ENCODE measurements at regions of chr1 and their contacts with region 1.

Region 1: DNA sequence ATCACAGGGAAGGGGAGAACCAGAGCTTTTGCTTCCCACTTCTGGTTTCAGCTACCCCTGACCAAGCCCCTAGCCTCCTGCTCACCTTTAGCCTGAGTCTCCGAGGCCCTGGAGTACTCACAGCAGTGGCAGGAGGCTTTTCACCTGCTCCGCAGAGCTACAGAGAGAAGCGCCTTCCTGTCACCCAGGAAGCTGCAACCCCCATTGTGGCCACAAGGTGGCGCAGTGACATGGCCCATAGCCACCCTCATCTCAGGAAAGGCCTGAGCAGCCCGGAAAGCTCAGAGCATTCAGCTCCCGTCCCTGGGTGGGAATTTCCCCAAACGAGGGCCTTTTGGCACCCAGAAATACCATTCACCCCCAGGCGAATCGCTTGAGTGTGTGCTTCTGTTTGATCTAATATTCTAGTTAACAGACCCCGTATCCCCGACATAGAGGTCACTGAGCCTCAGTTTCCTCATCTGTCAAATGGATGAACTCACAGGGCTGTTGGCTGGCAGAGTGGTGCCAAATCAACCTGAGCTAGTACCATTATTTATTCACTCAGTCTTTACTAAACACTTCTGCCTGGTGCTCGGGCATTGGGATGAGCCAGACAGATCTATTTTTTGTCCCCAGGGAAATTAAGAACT is 25.3 kb downstream of the A3GALT2 start:
- DNase-seq: peak; percentile 91
- H3K4me3 ChIP-seq: no peak overlapping the region
- H3K27ac ChIP-seq: no peak overlapping the region
- H3K4me1 ChIP-seq: peaks cover 2% of the 10 kb centered on the region
- H3K27me3 ChIP-seq: no peaks in the 10 kb centered on the region
- CTCF ChIP-seq: peak; percentile 97

Region 2: DNA sequence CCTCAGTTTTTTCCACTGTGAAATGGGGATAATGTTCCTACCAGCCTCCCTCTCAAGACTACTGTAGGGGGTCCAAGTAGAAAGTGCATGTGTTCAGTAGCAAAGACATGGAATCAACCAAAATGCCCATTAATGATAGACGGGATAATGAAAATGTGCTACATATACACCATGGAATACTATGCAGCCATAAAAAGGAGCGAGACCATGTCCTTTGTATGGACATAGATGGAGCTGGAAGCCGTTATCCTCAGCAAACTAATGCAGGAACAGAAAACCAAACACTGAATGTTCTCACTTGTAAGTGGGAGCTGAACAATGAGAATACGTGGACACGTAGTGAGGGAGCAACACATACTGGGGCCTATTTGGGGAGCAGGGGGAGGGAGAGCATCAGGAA is 45.3 kb before region 1 on chr1:
- CTCF ChIA-PET with region 1: no interaction called
- POLR2A ChIA-PET with region 1: no interaction called
- intact Hi-C with region 1: no loop called
- DNase-seq: no peak
- H3K4me3 ChIP-seq: no peak overlapping the region
- H3K27ac ChIP-seq: no peak overlapping the region
- H3K4me1 ChIP-seq: peaks cover 8% of the 10 kb centered on the region
- H3K27me3 ChIP-seq: no peaks in the 10 kb centered on the region
- CTCF ChIP-seq: no peak

Region 3: DNA sequence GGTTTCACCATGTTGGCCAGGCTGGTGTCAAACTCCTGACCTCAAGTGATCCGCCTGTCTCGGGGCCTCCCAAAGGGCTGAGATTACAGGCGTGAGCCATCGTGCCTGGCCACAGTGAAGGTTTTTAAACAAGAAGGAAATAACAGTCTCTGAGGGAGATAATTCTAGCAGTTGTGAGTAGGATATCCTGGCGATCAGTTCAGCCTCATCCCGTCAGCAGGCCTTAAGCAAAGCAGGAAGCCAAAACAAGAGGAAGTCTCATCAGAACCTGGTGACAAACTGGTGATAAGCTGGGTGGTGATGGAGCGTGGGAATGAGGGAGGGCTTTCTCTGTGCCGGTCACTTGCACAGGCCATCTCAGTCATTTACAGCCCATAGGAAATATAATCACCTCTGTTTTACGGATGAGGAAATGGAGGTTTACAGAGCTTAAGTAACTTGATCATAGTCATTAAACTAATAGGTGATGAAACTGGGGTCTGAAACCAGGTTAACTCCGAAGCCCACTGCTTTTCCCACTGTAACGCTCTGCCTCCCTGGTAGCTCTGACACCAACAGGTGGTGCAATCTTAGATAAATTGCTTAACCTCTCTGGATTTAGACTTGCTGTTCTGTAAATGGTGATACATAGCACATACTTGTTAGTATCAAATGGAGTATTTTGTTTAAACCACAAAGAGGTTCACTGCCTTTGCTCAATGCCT is 66.1 kb after region 1 on chr1:
- CTCF ChIA-PET with region 1: interaction called, 10 read pairs
- POLR2A ChIA-PET with region 1: no interaction called
- intact Hi-C with region 1: loop called (anchors 1 kb)
- DNase-seq: no peak
- H3K4me3 ChIP-seq: no peak overlapping the region
- H3K27ac ChIP-seq: peak overlapping the region; percentile 94
- H3K4me1 ChIP-seq: peaks cover 44% of the 10 kb centered on the region
- H3K27me3 ChIP-seq: no peaks in the 10 kb centered on the region
- CTCF ChIP-seq: no peak

Region 4: DNA sequence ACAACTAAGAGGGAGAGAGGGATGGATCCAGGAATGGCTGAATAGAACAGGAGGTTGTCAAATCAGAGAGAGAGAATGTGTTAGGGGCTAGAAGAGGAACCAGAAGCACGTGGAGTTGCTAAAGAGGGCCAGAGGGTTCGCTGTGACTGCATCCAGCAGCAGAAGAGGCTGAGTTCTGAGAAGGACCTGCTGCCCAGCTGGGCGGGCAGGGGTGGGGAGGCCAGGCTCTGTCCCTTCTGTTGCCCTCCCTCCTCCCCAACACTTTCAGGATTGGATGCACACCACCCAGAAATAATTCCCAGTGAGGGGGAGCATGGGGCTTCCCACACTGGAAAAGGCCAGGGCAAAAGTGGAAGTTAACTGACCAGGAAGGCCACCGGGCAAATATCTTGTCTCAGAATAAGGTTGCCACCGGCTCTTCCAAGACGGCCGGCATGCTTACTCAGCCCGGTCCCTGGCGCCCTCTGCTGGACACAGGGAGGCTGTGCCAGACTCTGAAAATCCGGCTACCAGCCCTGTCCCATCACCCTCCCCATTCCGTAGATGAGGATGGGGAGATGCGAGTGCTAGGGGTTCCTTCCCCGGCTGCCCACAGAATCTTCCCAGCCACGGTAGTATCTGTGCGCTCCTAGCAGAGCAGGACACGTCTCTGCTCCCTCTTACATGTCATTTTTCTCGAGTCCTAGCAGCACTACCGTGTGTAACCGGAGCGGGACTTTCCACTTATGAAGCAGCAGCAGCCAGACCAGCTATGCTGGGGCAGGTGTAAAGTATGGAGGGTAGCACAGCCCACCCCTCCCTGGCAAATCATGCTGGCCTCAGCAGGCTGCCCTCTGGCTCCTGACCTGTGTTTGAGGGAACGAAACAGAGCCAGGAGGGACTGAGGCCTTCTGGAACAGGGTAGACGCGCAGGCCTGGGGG is 72.2 kb after region 1 on chr1:
- CTCF ChIA-PET with region 1: interaction called, 10 read pairs
- POLR2A ChIA-PET with region 1: no interaction called
- intact Hi-C with region 1: loop called (anchors 1 kb)
- DNase-seq: peak; percentile 87
- H3K4me3 ChIP-seq: no peak overlapping the region
- H3K27ac ChIP-seq: no peak overlapping the region
- H3K4me1 ChIP-seq: peaks cover 32% of the 10 kb centered on the region
- H3K27me3 ChIP-seq: no peaks in the 10 kb centered on the region
- CTCF ChIP-seq: peak; percentile 96

Region 5: GRCh38 chr1:33455539-33456501 is 160.3 kb after region 1 on chr1:
- CTCF ChIA-PET with region 1: interaction called, 14 read pairs
- POLR2A ChIA-PET with region 1: no interaction called
- intact Hi-C with region 1: no loop called
- DNase-seq: peak; percentile 87
- H3K4me3 ChIP-seq: no peak overlapping the region
- H3K27ac ChIP-seq: no peak overlapping the region
- H3K4me1 ChIP-seq: peaks cover 4% of the 10 kb centered on the region
- H3K27me3 ChIP-seq: no peaks in the 10 kb centered on the region
- CTCF ChIP-seq: peak; percentile 82

Region 6: GRCh38 chr1:33472349-33472980 is 176.9 kb after region 1 on chr1 and contains the start of gene ZSCAN20:
- CTCF ChIA-PET with region 1: interaction called, 34 read pairs
- POLR2A ChIA-PET with region 1: no interaction called
- intact Hi-C with region 1: loop called (anchors 2 kb)
- DNase-seq: peak; percentile 99
- H3K4me3 ChIP-seq: peak within 1 kb of the TSS; percentile 70
- H3K27ac ChIP-seq: peak within 1 kb of the TSS; percentile 76
- H3K4me1 ChIP-seq: peaks cover 12% of the 10 kb centered on the region
- H3K27me3 ChIP-seq: no peaks in the 10 kb centered on the region
- CTCF ChIP-seq: no peak
- total RNA-seq, gene ZSCAN20: 3.9 and 4.5 TPM in 2 replicates

Region 7: GRCh38 chr1:33616773-33617172 is 321.2 kb after region 1 on chr1:
- CTCF ChIA-PET with region 1: interaction called, 6 read pairs
- POLR2A ChIA-PET with region 1: no interaction called
- intact Hi-C with region 1: loop called (anchors 2 kb)
- DNase-seq: no peak
- H3K4me3 ChIP-seq: no peak overlapping the region
- H3K27ac ChIP-seq: no peak overlapping the region
- H3K4me1 ChIP-seq: peaks cover 2% of the 10 kb centered on the region
- H3K27me3 ChIP-seq: no peaks in the 10 kb centered on the region
- CTCF ChIP-seq: no peak